ENCODE measurements at regions of chr14 and their contacts with region 1.

Region 1: DNA sequence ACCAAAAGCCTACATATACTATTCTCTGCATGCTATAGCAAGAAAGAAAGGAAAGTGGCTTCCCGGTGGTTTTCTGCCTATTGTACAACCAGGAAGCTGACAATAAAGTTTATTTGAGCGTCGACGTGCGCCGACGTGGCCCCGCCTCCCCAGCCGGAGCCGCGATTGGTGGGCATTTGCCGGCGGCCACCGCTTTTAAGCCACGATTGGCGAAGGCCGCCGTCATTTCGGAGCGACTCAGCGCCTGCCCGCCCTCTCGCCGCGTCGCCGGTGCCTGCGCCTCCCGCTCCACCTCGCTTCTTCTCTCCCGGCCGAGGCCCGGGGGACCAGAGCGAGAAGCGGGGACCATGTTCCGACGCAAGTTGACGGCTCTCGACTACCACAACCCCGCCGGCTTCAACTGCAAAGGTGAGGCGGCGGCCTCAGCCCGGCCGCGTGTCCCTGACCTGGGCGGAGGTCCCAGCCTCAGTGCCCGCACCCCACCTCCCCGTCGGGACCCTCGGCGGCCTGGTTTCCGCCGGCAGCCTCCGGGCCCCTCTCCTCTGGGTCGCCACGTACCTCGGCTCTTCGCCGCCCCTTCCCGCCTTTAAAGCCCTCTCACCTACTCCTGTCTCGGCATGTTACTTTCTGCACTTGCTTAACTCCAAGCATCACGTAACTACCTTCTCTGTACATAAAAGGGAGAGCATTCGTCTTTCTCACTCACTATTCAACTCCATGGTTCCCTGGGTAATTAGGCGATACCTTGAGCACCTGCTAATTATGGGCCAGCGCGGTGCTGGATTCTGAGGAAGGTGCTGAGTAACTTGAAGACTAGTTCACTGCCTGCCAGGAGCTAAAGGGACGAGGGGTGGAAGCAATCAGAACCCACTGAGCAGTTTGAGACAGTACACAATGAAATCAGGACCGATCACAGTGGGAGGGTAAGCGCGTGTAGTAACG is at the start of gene RTRAF:
- DNase-seq: peak; percentile 86
- ATAC-seq: peak; percentile 97
- H3K4me3 Mint-ChIP-seq: peak within 1 kb of the TSS; percentile 98
- H3K27ac Mint-ChIP-seq: peak within 1 kb of the TSS; percentile 93
- H3K4me1 Mint-ChIP-seq: peaks cover 37% of the 10 kb centered on the region
- H3K27me3 Mint-ChIP-seq: no peaks in the 10 kb centered on the region
- CTCF ChIP-seq: no peak
- total RNA-seq, gene RTRAF: 160 and 163 TPM in 2 replicates

Region 2: DNA sequence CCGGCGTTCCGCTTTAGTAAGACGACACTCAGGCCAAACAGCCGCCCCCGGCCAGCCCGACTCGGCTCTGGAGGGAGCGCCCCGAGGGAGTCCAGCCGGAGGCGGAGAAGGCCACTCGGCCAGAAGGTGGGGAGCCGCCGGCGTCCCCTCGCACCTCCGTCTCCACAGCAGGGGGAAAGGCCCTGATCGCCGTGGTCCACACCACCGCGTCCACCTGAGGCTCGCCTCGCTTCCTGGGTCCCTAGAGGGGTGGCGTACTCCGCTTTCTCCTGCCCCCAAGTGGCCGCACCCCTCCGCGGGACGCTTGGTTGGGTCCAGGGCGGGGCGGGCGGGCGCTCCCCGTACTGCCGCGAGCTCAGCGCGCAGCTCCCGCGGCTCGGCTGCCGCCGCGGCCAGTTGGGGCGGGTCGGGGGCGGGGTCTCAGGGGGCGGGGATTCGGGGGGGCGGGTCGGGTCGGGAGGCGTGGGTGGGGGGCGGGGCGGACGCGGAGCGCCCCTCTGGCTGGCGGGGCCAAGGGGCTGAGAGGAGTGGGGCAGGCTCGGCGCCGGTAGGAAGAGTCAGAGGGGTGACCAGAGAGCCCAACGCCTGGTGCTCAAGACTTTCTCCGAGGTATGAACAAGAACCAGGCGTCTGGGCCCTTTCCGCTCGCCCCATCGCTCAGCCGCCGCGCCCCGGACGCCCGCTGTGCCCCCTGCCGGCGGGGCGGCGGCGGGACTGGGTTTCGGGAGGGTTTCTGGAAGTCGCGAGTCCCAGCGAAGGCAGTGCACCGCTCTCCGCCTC is 338.0 kb before region 1 on chr14 and contains the start of gene FRMD6:
- CTCF ChIA-PET with region 1: no interaction called
- POLR2A ChIA-PET with region 1: no interaction called
- intact Hi-C with region 1: loop called (anchors 1 kb)
- DNase-seq: peak; percentile 71
- ATAC-seq: peak; percentile 80
- H3K4me3 Mint-ChIP-seq: peak within 1 kb of the TSS; percentile 82
- H3K27ac Mint-ChIP-seq: peak within 1 kb of the TSS; percentile 35
- H3K4me1 Mint-ChIP-seq: peaks cover 8% of the 10 kb centered on the region
- H3K27me3 Mint-ChIP-seq: peaks cover 30% of the 10 kb centered on the region
- CTCF ChIP-seq: no peak
- total RNA-seq, gene FRMD6: 0.32 and 0.33 TPM in 2 replicates